ENCODE measurements at regions of chr3 and their contacts with region 1.

Region 1: GRCh38 chr3:143674100-143674968 is 173.9 kb downstream of the SLC9A9 start:
- DNase-seq: peak; percentile 47
- ATAC-seq: peak; percentile 93
- H3K4me3 Mint-ChIP-seq: peak overlapping the region; percentile 76
- H3K27ac Mint-ChIP-seq: peak overlapping the region; percentile 98
- H3K4me1 Mint-ChIP-seq: peaks cover 56% of the 10 kb centered on the region
- H3K27me3 Mint-ChIP-seq: no peaks in the 10 kb centered on the region
- CTCF ChIP-seq: peak; percentile 72

Region 2: DNA sequence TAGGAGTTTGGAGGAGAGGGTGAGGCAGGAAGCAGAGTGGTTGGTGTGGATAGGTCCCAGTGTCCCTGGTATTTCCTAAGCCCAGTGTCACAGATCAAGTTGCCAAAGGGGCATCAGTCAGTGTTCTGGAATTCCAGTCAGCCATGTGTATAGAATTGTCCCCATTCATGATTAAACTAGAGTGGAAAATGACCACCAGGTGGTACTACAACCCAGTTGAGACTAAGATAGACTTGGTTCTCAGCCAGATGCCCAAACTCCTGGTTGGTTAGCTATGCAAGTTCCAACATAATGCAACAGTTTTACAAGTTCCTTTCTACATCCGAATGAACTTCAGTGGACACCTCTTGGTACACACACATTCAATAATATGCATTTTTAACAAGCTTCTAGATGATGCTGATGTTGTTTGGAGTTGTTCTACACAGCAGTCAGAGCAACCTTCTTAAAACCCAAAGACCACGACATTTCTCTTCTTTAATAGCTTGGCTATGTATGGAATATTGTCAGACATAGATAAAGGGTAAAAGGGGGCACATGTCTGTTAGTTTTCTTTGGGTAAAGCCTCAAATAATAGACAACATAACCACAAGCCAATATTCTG is 1087.4 kb before region 1 on chr3:
- CTCF ChIA-PET with region 1: no interaction called
- POLR2A ChIA-PET with region 1: no interaction called
- intact Hi-C with region 1: loop called (anchors 10 kb)
- DNase-seq: no peak
- ATAC-seq: peak; percentile 65
- H3K4me3 Mint-ChIP-seq: no peak overlapping the region
- H3K27ac Mint-ChIP-seq: no peak overlapping the region
- H3K4me1 Mint-ChIP-seq: no peaks in the 10 kb centered on the region
- H3K27me3 Mint-ChIP-seq: peaks cover 19% of the 10 kb centered on the region
- CTCF ChIP-seq: no peak

Region 3: GRCh38 chr3:142993958-142994442 is 680.3 kb before region 1 on chr3:
- CTCF ChIA-PET with region 1: no interaction called
- POLR2A ChIA-PET with region 1: no interaction called
- intact Hi-C with region 1: no loop called
- DNase-seq: peak; percentile 25
- ATAC-seq: peak; percentile 54
- H3K4me3 Mint-ChIP-seq: no peak overlapping the region
- H3K27ac Mint-ChIP-seq: no peak overlapping the region
- H3K4me1 Mint-ChIP-seq: peaks cover 15% of the 10 kb centered on the region
- H3K27me3 Mint-ChIP-seq: no peaks in the 10 kb centered on the region
- CTCF ChIP-seq: no peak

Region 4: GRCh38 chr3:143016321-143016972 is 657.9 kb before region 1 on chr3:
- CTCF ChIA-PET with region 1: interaction called, 6 read pairs
- POLR2A ChIA-PET with region 1: no interaction called
- intact Hi-C with region 1: loop called (anchors 2 kb)
- DNase-seq: no peak
- ATAC-seq: no peak
- H3K4me3 Mint-ChIP-seq: no peak overlapping the region
- H3K27ac Mint-ChIP-seq: no peak overlapping the region
- H3K4me1 Mint-ChIP-seq: peaks cover 10% of the 10 kb centered on the region
- H3K27me3 Mint-ChIP-seq: no peaks in the 10 kb centered on the region
- CTCF ChIP-seq: peak; percentile 79

Region 5: GRCh38 chr3:143084856-143085731 is 589.2 kb before region 1 on chr3:
- CTCF ChIA-PET with region 1: interaction called, 4 read pairs
- POLR2A ChIA-PET with region 1: no interaction called
- intact Hi-C with region 1: loop called (anchors 1 kb)
- DNase-seq: peak; percentile 19
- ATAC-seq: peak; percentile 53
- H3K4me3 Mint-ChIP-seq: no peak overlapping the region
- H3K27ac Mint-ChIP-seq: peak overlapping the region; percentile 14
- H3K4me1 Mint-ChIP-seq: peaks cover 31% of the 10 kb centered on the region
- H3K27me3 Mint-ChIP-seq: no peaks in the 10 kb centered on the region
- CTCF ChIP-seq: no peak

Region 6: GRCh38 chr3:143348486-143349327 is 325.6 kb before region 1 on chr3:
- CTCF ChIA-PET with region 1: interaction called, 4 read pairs
- POLR2A ChIA-PET with region 1: interaction called, 4 read pairs
- intact Hi-C with region 1: loop called (anchors 5 kb)
- DNase-seq: no peak
- ATAC-seq: no peak
- H3K4me3 Mint-ChIP-seq: peak overlapping the region; percentile 16
- H3K27ac Mint-ChIP-seq: no peak overlapping the region
- H3K4me1 Mint-ChIP-seq: peaks cover 55% of the 10 kb centered on the region
- H3K27me3 Mint-ChIP-seq: no peaks in the 10 kb centered on the region
- CTCF ChIP-seq: no peak

Region 7: GRCh38 chr3:143529018-143529478 is 145.3 kb before region 1 on chr3:
- CTCF ChIA-PET with region 1: interaction called, 4 read pairs
- POLR2A ChIA-PET with region 1: interaction called, 3 read pairs
- intact Hi-C with region 1: loop called (anchors 1 kb)
- DNase-seq: peak; percentile 33
- ATAC-seq: peak; percentile 98
- H3K4me3 Mint-ChIP-seq: peak overlapping the region; percentile 74
- H3K27ac Mint-ChIP-seq: peak overlapping the region; percentile 89
- H3K4me1 Mint-ChIP-seq: peaks cover 78% of the 10 kb centered on the region
- H3K27me3 Mint-ChIP-seq: no peaks in the 10 kb centered on the region
- CTCF ChIP-seq: no peak